ENCODE measurements at regions of chr6 and their contacts with region 1.

Region 1: DNA sequence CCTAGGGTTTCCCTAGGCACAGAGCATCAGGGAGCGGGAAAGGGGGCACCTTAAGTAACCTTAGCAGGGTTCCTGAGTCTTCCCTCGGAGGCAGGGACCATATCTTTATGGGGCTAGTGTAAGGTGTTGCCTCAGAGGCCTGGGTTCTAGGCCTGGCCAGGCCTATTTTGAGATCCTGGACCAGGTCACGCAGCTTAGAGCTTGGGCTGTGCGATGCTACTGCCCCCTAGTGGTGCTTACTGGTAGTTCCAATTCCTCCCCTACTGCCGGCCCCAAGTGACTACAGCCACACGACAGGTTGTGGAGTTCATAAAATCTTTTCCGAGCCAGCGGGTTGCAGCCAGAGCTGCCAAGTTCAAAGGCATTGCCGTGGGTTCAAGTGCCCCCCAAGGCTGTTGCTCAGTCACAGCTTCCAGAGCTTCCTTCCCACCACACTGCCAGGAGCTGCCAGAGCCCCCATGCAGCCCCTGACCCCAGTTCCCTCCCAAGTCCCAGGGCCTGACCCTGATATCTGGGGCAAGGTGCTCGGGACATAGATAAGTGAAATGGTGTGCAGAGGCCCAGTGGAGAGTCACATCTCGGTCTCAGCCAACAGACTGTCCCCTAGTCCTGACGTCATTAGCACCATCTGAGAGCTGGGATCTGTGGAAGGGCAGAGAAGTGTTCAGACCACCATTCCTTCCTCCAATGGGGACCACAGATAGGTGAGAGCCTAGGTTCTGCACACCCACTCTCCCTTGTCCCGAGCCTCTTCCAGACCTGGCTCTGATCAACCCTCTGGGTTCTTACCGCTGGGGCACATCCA is 3.3 kb downstream of the LRRC73 start:
- DNase-seq: peak; percentile 90
- ATAC-seq: peak; percentile 57
- H3K4me3 ChIP-seq: no peak overlapping the region
- H3K4me3 Mint-ChIP-seq: no peak overlapping the region
- H3K27ac ChIP-seq: no peak overlapping the region
- H3K27ac Mint-ChIP-seq: no peak overlapping the region
- H3K4me1 ChIP-seq: peaks cover 21 to 26% of the 10 kb centered on the region in 2 donors
- H3K4me1 Mint-ChIP-seq: peaks cover 27% of the 10 kb centered on the region
- H3K27me3 ChIP-seq: peaks cover 0 to 20% (median 8%) of the 10 kb centered on the region in 4 experiments
- H3K27me3 Mint-ChIP-seq: peaks cover 10% of the 10 kb centered on the region
- CTCF ChIP-seq: peak; percentile 92

Region 2: DNA sequence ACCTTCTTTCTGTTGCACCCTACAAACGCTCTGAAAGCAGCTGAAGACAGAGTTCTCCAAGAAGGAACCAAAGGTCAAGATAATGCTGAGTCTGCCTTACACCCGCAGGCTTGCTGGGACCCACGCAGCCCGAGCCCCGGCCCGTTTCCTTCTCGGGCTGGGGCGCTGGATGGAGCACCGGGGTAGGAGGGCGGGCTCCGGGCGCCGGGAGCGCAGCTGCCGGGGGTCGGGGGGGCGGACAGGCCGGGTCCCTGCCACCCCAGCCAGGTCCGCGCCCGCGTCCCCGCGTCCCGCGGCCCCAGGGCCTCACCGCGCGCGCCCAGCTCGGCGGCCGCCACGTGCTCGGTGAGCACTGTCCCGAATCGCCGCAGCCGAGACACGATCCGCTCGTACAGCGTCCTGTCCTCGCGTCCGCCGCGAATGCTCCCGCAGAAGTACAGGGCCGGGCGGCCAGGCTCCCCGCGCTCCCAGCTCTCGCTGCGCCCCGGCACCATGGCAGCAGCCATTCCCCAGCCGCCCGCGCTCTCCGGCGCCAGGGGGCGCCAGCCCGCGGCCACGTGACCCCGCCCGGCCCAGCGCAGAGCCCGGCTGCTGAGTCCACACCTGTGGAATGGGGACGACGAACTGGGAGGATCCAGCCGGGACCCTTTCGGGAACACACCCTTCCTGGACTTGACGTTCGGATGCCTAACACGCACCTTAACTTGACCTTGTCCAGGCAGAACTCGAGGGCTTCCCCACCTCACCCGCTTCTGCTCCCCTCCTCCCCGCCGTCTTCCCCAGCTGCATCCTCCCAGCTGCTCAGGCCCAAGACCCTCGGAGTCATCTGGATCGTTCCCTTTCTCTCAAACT is 277.7 kb before region 1 on chr6 and contains the start of gene DNPH1:
- CTCF ChIA-PET with region 1: interaction called, 15 read pairs
- POLR2A ChIA-PET with region 1: no interaction called
- intact Hi-C with region 1: loop called (anchors 1 kb)
- DNase-seq: peak; percentile 89
- ATAC-seq: peak; percentile 67
- H3K4me3 ChIP-seq: peak within 1 kb of the TSS; percentile 43 to 70 (median 61)
- H3K4me3 Mint-ChIP-seq: peak within 1 kb of the TSS; percentile 92
- H3K27ac ChIP-seq: peak within 1 kb of the TSS in 1 of 2 donors; percentile 73
- H3K27ac Mint-ChIP-seq: peak within 1 kb of the TSS; percentile 90
- H3K4me1 ChIP-seq: peaks cover 34 to 45% of the 10 kb centered on the region in 2 donors
- H3K4me1 Mint-ChIP-seq: peaks cover 29% of the 10 kb centered on the region
- H3K27me3 ChIP-seq: peaks cover 0 to 5% (median 0%) of the 10 kb centered on the region in 4 experiments
- H3K27me3 Mint-ChIP-seq: peaks cover 9% of the 10 kb centered on the region
- CTCF ChIP-seq: peak; percentile 95
- total RNA-seq, gene DNPH1: 25.8 and 29.0 TPM in 2 replicates

Region 3: DNA sequence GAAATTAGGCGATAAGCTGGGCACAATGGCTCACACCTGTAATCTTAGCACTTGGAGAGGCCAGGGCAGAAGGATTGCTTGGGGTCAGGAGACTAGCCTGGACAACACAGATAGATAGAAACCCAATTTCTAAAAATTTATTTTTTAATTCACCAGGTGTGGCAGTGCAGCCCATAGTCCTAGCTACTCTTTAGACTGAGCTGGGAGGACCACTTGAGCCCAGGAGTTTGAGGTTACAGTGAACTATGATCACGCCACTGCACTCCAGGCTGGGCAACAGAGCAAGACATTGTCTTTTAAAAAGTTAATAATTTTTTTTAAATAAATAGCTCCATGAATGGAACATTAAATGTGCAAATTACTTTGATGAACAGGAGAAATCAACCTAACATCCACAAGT is 145.6 kb before region 1 on chr6:
- CTCF ChIA-PET with region 1: interaction called, 9 read pairs
- POLR2A ChIA-PET with region 1: no interaction called
- intact Hi-C with region 1: loop called (anchors 5 kb)
- DNase-seq: no peak
- ATAC-seq: peak; percentile 41
- H3K4me3 ChIP-seq: no peak overlapping the region
- H3K4me3 Mint-ChIP-seq: no peak overlapping the region
- H3K27ac ChIP-seq: peak overlapping the region in 1 of 2 donors; percentile 41
- H3K27ac Mint-ChIP-seq: peak overlapping the region; percentile 20
- H3K4me1 ChIP-seq: peaks cover 32 to 36% of the 10 kb centered on the region in 2 donors
- H3K4me1 Mint-ChIP-seq: peaks cover 50% of the 10 kb centered on the region
- H3K27me3 ChIP-seq: no peaks in the 10 kb centered on the region
- H3K27me3 Mint-ChIP-seq: no peaks in the 10 kb centered on the region
- CTCF ChIP-seq: no peak

Region 4: DNA sequence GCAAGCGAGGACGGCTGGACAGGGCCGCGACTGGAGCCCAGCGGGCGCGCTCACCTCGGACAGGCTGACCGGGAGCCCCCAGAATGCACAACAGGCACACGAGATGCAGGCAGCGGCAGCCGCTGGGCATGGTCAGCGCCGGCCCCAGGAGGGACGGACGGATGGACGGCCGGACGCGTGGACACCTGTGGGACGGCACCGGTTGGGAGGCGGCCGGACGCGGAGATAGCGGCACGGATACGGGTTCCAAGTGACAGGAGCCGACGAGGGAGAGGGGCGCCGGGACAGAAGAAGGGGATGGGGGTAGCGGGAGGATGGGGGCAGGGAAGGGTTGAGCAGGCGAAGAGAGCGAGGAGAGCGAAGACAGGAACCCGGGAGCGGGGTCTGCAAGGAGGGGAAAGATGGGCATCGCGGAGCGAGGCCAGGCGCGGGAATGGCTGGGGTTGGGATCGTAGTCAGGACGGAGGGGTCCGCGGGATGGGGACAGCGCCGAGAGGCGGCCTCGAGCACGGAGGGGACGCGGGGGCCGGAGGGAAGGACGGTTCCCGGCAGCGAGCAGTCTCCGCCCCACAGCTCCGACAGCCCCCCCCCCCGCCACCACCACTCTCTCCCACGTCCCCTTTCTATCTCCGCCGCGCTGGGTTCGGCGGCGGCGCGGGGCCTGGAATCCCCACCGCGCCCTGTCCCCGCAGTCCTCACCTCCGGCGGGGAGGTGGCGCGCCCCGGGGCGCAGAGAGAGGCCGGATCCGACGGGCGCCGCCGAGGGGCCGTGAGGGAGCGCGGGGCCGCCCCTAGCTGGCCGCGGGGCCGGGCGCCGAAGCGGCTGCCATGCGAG is 52.0 kb before region 1 on chr6:
- CTCF ChIA-PET with region 1: interaction called, 43 read pairs
- POLR2A ChIA-PET with region 1: interaction called, 4 read pairs
- intact Hi-C with region 1: loop called (anchors 1 kb)
- DNase-seq: peak; percentile 73
- ATAC-seq: peak; percentile 53
- H3K4me3 ChIP-seq: peak overlapping the region; percentile 18 to 67 (median 61)
- H3K4me3 Mint-ChIP-seq: peak overlapping the region; percentile 89
- H3K27ac ChIP-seq: no peak overlapping the region
- H3K27ac Mint-ChIP-seq: peak overlapping the region; percentile 63
- H3K4me1 ChIP-seq: peaks cover 7 to 12% of the 10 kb centered on the region in 2 donors
- H3K4me1 Mint-ChIP-seq: peaks cover 14% of the 10 kb centered on the region
- H3K27me3 ChIP-seq: peaks cover 0 to 4% (median 2%) of the 10 kb centered on the region in 4 experiments
- H3K27me3 Mint-ChIP-seq: peaks cover 3% of the 10 kb centered on the region
- CTCF ChIP-seq: peak; percentile 90

Region 5: GRCh38 chr6:43496370-43497128 is 10.3 kb before region 1 on chr6:
- CTCF ChIA-PET with region 1: interaction called, 69 read pairs
- POLR2A ChIA-PET with region 1: no interaction called
- intact Hi-C with region 1: no loop called
- DNase-seq: peak; percentile 39
- ATAC-seq: peak; percentile 39
- H3K4me3 ChIP-seq: no peak overlapping the region
- H3K4me3 Mint-ChIP-seq: no peak overlapping the region
- H3K27ac ChIP-seq: no peak overlapping the region
- H3K27ac Mint-ChIP-seq: no peak overlapping the region
- H3K4me1 ChIP-seq: peaks cover 0 to 6% of the 10 kb centered on the region in 2 donors
- H3K4me1 Mint-ChIP-seq: peaks cover 12% of the 10 kb centered on the region
- H3K27me3 ChIP-seq: no peaks in the 10 kb centered on the region
- H3K27me3 Mint-ChIP-seq: no peaks in the 10 kb centered on the region
- CTCF ChIP-seq: peak; percentile 40

Region 6: GRCh38 chr6:43842231-43842794 is 335.4 kb after region 1 on chr6:
- CTCF ChIA-PET with region 1: no interaction called
- POLR2A ChIA-PET with region 1: no interaction called
- intact Hi-C with region 1: no loop called
- DNase-seq: no peak
- ATAC-seq: no peak
- H3K4me3 ChIP-seq: no peak overlapping the region
- H3K4me3 Mint-ChIP-seq: no peak overlapping the region
- H3K27ac ChIP-seq: no peak overlapping the region
- H3K27ac Mint-ChIP-seq: no peak overlapping the region
- H3K4me1 ChIP-seq: no peaks in the 10 kb centered on the region
- H3K4me1 Mint-ChIP-seq: no peaks in the 10 kb centered on the region
- H3K27me3 ChIP-seq: peaks cover 0 to 4% (median 0%) of the 10 kb centered on the region in 4 experiments
- H3K27me3 Mint-ChIP-seq: peaks cover 28% of the 10 kb centered on the region
- CTCF ChIP-seq: no peak